Activated CD4-positive, alpha-beta T cell treated with anti-CD3 and anti-CD28 coated beads for 36 hours (primary cell): ENCODE measurements at regions of chr16 and their contacts with region 1.

Region 1: GRCh38 chr16:25111403-25112166 is at the start of gene LCMT1:
- DNase-seq: peak; percentile 96
- ATAC-seq: peak; percentile 79
- H3K4me3 Mint-ChIP-seq: peak within 1 kb of the TSS; percentile 87
- H3K27ac Mint-ChIP-seq: peak within 1 kb of the TSS; percentile 99
- H3K4me1 Mint-ChIP-seq: peaks cover 52% of the 10 kb centered on the region
- H3K27me3 Mint-ChIP-seq: no peaks in the 10 kb centered on the region
- total RNA-seq, gene LCMT1: 33.3 to 36.2 TPM

Region 2: GRCh38 chr16:24729362-24729984 is 382.1 kb before region 1 on chr16 and contains the start of gene TNRC6A:
- CTCF ChIA-PET with region 1: no interaction called
- POLR2A ChIA-PET with region 1: no interaction called
- intact Hi-C with region 1: loop called in 1 of 2 experiments (anchors 2 kb)
- DNase-seq: peak; percentile 87
- ATAC-seq: peak; percentile 77
- H3K4me3 Mint-ChIP-seq: peak within 1 kb of the TSS; percentile 99
- H3K27ac Mint-ChIP-seq: peak within 1 kb of the TSS; percentile 99
- H3K4me1 Mint-ChIP-seq: peaks cover 44% of the 10 kb centered on the region
- H3K27me3 Mint-ChIP-seq: no peaks in the 10 kb centered on the region
- total RNA-seq, gene TNRC6A: 34.6 to 46.1 TPM

Region 3: DNA sequence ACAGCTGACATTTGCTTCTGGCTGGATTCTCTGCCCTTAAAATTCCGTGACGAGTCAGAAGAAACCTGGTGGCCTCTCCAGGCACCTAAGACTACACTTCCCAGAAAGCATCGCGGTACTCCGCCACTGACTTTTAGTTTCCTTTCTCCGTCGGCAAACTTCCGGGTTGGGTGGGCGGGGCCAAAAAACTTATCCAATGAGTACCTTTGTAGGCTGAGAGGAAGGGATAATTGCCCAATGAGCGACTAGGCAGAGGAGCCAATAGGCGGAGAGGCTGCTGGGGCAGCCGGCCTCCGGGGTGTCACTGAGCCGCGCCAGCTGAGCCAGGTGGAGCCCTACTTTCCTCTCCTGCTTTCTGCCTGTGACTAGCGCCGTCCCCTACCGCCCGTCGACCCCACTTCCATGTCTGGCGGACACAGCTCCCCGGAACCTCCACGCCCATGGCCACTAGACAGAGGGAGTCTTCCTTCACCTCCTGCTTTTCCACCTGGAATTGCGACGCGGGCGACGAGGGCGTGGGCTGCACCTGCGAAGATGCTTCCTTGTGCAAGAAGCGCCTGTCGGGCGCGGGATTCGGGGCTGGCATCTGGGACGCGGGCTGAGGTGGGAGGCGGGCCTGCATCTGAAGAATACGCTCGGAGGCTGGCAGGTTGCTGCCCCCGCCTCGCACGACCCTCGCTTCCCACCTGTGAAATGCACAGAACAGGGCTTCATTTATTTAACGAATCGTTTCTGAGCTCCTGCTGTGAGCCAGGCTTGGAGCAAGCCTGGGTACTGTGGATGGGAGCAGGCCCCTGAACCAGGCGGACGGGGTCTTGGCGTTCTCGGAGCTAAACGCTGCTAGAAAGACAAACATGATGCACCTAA is 79.9 kb before region 1 on chr16:
- CTCF ChIA-PET with region 1: interaction called, 3 read pairs
- POLR2A ChIA-PET with region 1: no interaction called
- intact Hi-C with region 1: loop called (anchors 1 kb)
- DNase-seq: peak; percentile 93
- ATAC-seq: peak; percentile 97
- H3K4me3 Mint-ChIP-seq: peak overlapping the region; percentile 75
- H3K27ac Mint-ChIP-seq: peak overlapping the region; percentile 100
- H3K4me1 Mint-ChIP-seq: peaks cover 46% of the 10 kb centered on the region
- H3K27me3 Mint-ChIP-seq: no peaks in the 10 kb centered on the region

Region 4: DNA sequence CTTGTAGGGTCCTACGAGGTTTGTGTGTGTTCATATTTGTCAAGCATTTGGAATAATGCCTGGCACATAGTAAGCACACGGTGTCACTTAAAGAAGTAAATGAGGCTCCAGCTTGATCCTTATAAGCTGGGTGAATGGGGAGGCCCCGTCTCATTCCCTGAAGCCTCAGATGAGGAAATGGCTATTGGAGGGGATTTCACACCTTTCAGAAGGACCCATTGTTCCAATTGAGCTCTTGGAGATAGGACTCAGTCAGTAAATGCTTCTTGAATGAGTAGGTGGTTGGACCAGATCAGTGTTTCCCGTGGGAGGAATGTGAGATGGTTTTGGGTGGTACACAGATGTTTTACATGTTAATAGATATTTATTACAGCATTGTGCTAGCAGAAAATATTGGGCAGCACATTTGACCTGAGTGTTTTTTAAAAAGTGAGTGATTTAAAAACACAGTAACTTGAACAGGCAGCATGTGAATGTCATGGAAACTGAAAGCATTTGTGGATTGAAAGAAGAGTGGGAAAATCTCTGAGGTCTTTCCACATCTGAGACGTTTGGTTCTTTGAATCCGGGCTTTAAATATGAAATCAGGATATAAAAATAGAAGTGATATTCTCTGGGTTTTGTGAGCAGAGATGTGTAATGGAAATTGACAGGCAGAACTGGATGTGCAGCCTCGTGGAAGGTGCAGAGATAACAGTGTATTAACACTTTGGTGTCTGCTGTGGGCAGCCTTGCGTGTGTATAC is 60.0 kb before region 1 on chr16:
- CTCF ChIA-PET with region 1: interaction called, 6 read pairs
- POLR2A ChIA-PET with region 1: interaction called, 3 read pairs
- intact Hi-C with region 1: loop called in 1 of 2 experiments (anchors 1 kb)
- DNase-seq: peak; percentile 46
- ATAC-seq: peak; percentile 30
- H3K4me3 Mint-ChIP-seq: peak overlapping the region; percentile 59
- H3K27ac Mint-ChIP-seq: peak overlapping the region; percentile 87
- H3K4me1 Mint-ChIP-seq: peaks cover 60% of the 10 kb centered on the region
- H3K27me3 Mint-ChIP-seq: no peaks in the 10 kb centered on the region

Region 5: DNA sequence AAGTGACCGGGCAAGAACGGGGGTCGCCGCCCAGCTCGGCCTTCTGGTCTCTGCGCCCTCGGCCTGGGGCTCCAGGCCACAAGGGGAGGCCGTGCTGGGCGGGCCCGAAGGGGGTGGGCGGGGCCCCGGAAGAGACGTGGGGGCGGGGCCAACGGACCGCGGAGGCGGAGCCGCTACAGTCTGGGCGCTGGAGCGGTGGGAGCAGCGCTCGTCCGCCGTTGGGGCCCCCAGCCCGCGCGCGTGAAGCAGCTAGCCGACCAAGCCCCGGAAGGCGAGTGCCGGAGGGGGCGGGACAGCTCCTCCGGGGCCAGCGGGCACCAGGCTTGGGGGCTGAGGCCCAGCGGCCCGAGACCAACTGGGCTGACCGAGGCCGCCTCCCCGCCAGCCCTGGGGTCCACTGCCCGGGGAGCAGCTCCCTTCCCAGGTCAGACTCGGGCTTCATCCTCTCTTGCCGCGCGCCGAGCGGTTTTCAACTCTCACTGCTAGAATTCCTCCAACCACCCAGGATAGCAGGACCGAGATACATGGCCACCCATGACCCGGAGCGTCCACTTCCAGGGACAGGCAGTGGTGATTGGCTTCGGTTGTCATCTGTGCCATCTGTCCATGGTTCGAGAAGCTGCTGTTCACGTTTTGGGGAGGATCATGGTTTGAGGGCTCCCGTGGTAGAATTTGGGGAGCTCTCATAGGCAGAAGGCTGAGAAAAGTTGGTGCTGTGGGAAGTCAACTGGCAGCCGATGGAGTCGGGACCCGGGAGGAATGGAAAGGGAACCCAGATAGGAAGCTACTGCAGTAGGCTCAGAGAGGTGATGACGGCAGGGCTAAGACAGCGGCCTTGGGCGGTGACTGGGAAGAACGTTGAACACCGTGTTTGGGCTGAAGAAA is 44.6 kb before region 1 on chr16:
- CTCF ChIA-PET with region 1: interaction called, 3 read pairs
- POLR2A ChIA-PET with region 1: interaction called, 4 read pairs
- intact Hi-C with region 1: loop called (anchors 1 to 2 kb)
- DNase-seq: peak; percentile 91
- ATAC-seq: peak; percentile 97
- H3K4me3 Mint-ChIP-seq: peak overlapping the region; percentile 76
- H3K27ac Mint-ChIP-seq: peak overlapping the region; percentile 81
- H3K4me1 Mint-ChIP-seq: peaks cover 38% of the 10 kb centered on the region
- H3K27me3 Mint-ChIP-seq: no peaks in the 10 kb centered on the region

Region 6: DNA sequence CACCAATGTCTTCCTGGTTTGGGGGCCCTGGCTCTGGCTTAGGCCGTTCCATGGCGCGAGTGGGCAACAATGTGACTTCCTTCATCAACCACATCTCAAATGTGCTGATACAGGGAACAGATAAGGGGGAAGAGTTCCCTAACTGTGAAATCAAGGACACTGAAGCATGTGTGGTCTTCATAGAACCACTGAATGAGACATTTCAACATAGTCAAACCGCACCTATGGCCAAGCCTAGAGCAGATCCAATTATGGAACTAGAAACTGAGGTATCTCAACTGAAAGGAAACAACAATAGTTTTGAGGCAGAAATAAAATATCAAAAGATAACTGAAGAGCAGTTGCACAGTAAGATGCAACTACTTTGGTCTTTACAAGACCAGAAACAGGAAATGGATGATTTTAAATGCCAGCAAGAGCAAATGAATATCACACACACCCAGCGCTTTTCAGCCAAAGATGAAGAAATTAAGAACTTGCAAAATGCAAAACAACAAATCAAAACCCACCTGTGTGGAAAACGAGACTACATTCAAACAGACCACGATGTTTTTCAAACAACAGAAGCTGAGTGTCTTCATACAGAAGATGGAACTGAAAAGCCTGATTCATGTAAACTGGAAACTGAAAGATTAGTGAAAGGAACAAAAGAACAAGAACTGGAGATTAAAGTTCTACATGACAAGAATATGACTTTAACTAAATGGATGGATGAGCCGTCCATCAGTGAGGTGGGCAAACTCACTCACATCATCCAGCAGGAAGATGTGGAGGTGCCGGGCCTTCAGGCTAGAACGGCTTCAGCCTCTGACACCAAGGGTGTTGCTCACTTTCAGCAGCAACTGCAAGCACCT is 18.1 kb before region 1 on chr16:
- CTCF ChIA-PET with region 1: interaction called, 3 read pairs
- POLR2A ChIA-PET with region 1: no interaction called
- intact Hi-C with region 1: loop called in 1 of 2 experiments (anchors 1 kb)
- DNase-seq: peak; percentile 42
- ATAC-seq: peak; percentile 79
- H3K4me3 Mint-ChIP-seq: peak overlapping the region; percentile 17
- H3K27ac Mint-ChIP-seq: peak overlapping the region; percentile 90
- H3K4me1 Mint-ChIP-seq: peaks cover 28% of the 10 kb centered on the region
- H3K27me3 Mint-ChIP-seq: no peaks in the 10 kb centered on the region

Region 7: DNA sequence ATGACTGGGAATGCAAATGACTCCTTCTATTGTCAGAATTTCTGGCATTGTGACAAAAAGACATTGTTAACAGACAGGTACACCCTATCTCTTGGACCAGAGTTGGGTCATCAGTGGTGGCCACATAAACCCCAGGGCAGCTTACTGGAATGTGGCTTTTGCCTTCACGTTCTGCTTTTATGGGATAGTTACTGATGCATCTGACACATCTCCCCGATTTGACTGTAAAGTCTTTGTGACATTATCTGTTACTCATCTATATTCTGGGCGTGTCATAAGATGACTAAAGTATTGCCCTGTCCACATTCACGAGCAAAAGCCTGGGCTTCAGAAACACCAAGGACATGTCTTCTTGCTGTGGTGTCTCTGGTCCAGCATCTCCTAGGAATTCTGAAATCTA is 86.4 kb after region 1 on chr16:
- CTCF ChIA-PET with region 1: no interaction called
- POLR2A ChIA-PET with region 1: no interaction called
- intact Hi-C with region 1: no loop called
- DNase-seq: no peak
- ATAC-seq: no peak
- H3K4me3 Mint-ChIP-seq: no peak overlapping the region
- H3K27ac Mint-ChIP-seq: no peak overlapping the region
- H3K4me1 Mint-ChIP-seq: no peaks in the 10 kb centered on the region
- H3K27me3 Mint-ChIP-seq: no peaks in the 10 kb centered on the region

Region 8: DNA sequence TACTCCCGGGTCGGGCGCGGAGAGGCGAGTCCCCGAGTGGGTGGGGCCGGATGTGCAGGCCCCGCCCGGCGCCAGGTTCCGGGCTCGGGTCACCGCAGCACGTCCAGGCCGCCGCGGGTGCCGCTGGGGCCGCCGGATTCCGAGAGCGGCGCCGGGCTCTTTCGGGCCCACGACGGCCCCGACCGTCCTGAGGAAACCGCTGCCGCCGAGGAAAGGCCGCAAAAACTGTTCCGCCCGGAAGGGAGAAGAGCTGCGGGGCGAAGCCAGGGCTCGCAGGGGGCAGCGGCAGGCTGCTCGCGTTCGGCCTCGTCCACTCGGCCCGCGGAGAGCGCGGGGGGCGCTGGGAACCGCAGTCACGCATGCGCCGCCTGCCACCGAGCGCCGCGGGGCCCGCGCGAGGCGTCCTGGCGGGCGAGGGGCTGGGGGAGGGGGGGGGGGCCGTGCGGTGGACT is 145.9 kb after region 1 on chr16 and contains the start of gene ZKSCAN2:
- CTCF ChIA-PET with region 1: no interaction called
- POLR2A ChIA-PET with region 1: no interaction called
- intact Hi-C with region 1: loop called in 1 of 2 experiments (anchors 1 kb)
- DNase-seq: peak; percentile 92
- ATAC-seq: peak; percentile 82
- H3K4me3 Mint-ChIP-seq: peak within 1 kb of the TSS; percentile 93
- H3K27ac Mint-ChIP-seq: peak within 1 kb of the TSS; percentile 98
- H3K4me1 Mint-ChIP-seq: peaks cover 59% of the 10 kb centered on the region
- H3K27me3 Mint-ChIP-seq: no peaks in the 10 kb centered on the region
- total RNA-seq, gene ZKSCAN2: 5.5 to 5.6 TPM